OCI-LY7 (cell line): ENCODE measurements at regions of chr11 and their contacts with region 1.

Region 1: DNA sequence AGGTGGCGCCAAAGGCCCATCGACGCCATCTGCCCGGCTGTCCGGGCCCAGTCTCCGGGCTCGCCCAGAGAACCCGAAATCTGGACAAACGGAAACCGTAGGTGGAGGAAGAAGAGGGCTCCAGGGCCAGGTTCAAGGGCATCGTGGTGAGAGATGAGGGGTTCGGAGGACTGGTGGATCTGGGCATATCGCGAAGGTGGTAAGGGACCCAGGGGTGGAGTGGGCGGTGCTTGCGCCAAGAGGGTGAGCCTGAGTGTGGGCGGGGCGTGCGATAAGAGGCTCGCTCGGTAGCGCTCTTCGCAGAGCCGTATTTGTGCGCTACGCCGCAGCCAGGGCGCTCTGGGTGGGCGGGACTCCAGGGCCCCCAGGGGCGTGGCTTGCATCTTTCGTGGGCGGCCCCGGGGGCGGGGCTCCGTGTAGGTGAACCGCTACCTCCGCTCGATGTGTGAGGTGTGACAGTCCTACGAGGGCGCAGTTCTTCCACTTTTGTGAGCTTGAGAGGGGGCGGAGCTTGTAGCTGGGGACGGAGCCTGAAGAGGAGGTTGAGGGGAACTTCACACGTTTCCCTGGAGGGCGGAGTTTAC is 4.8 kb downstream of the CD248 start:
- DNase-seq: peak; percentile 98
- H3K4me3 ChIP-seq: peak overlapping the region; percentile 70
- H3K27ac ChIP-seq: peak overlapping the region; percentile 72
- H3K4me1 ChIP-seq: peaks cover 18% of the 10 kb centered on the region
- CTCF ChIP-seq: peak; percentile 99

Region 2: DNA sequence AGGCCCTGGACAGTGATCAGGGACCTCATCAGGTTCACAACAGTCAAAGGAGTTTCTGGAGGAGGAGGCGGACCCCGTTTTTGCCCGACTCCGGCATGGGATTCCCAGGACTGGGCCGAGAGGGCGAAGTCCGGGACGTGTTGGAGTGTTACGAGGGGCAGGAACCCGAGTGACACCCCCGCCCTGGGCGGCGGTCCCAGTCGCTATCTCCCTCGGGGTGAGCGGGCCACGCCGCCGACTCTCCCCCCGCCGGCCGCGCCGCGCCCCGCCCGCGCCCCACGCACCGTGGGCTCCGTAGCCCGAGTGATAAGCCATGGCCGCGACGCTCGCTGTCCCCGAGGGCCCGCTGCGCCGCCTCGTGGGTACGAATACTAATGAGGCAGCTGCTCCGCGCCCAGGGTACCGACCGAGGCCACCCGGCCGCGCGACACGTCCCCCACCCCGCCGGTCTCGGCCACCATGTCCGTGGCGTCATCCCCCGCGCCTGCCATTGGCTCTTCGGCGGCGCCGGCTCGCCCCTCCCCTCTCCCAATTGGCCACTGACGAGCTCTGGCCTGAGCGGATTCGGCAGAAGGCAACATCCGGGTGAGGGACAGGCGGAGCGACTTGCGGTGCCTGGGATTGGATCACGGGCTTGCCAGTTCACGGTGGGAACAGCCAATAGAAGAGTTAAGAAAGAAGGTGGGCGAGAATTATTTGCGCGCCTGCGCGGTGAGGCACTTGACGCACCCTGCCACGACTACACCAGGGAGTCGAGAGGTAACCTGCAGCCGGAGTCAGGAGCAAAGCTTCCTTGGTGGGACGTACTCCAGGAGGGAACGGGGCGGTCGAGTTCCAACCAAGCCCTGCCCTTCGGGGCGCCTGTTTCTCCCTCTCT is 23.1 kb before region 1 on chr11 and contains the start of gene YIF1A:
- CTCF ChIA-PET with region 1: interaction called, 3 read pairs
- POLR2A ChIA-PET with region 1: interaction called, 13 read pairs
- intact Hi-C with region 1: no loop called
- DNase-seq: peak; percentile 99
- H3K4me3 ChIP-seq: peak within 1 kb of the TSS; percentile 88
- H3K27ac ChIP-seq: peak within 1 kb of the TSS; percentile 37
- H3K4me1 ChIP-seq: peaks cover 31% of the 10 kb centered on the region
- CTCF ChIP-seq: no peak; the same call in 1 of the 2 replicates
- total RNA-seq, gene YIF1A: 63.9 and 73.4 TPM in 2 replicates

Region 3: GRCh38 chr11:66328307-66329144 is 16.5 kb after region 1 on chr11:
- CTCF ChIA-PET with region 1: interaction called, 4 read pairs
- POLR2A ChIA-PET with region 1: interaction called, 7 read pairs
- intact Hi-C with region 1: loop called (anchors 1 kb)
- DNase-seq: peak; percentile 88
- H3K4me3 ChIP-seq: peak overlapping the region; percentile 51
- H3K27ac ChIP-seq: peak overlapping the region; percentile 45
- H3K4me1 ChIP-seq: peaks cover 46% of the 10 kb centered on the region
- CTCF ChIP-seq: peak; percentile 91

Region 4: GRCh38 chr11:66344550-66345315 is 32.7 kb after region 1 on chr11 and contains the start of gene BRMS1:
- CTCF ChIA-PET with region 1: interaction called, 6 read pairs
- POLR2A ChIA-PET with region 1: interaction called, 7 read pairs
- intact Hi-C with region 1: loop called (anchors 5 kb)
- DNase-seq: peak; percentile 96
- H3K4me3 ChIP-seq: peak within 1 kb of the TSS; percentile 88
- H3K27ac ChIP-seq: peak within 1 kb of the TSS; percentile 35
- H3K4me1 ChIP-seq: peaks cover 37% of the 10 kb centered on the region
- CTCF ChIP-seq: no peak
- total RNA-seq, gene BRMS1: 43.8 and 56.2 TPM in 2 replicates

Region 5: GRCh38 chr11:66371627-66372415 is 59.8 kb after region 1 on chr11 and contains the start of gene SLC29A2:
- CTCF ChIA-PET with region 1: interaction called, 3 read pairs
- POLR2A ChIA-PET with region 1: interaction called, 6 read pairs
- intact Hi-C with region 1: loop called (anchors 1 kb)
- DNase-seq: peak; percentile 95
- H3K4me3 ChIP-seq: peak within 1 kb of the TSS; percentile 82
- H3K27ac ChIP-seq: peak within 1 kb of the TSS; percentile 86
- H3K4me1 ChIP-seq: peaks cover 22% of the 10 kb centered on the region
- CTCF ChIP-seq: no peak; the same call in 1 of the 2 replicates
- total RNA-seq, gene SLC29A2: 24.7 and 33.6 TPM in 2 replicates

Region 6: GRCh38 chr11:66386171-66387069 is 74.4 kb after region 1 on chr11:
- CTCF ChIA-PET with region 1: interaction called, 7 read pairs
- POLR2A ChIA-PET with region 1: interaction called, 3 read pairs
- intact Hi-C with region 1: loop called (anchors 1 kb)
- DNase-seq: peak; percentile 91
- H3K4me3 ChIP-seq: peak overlapping the region; percentile 42
- H3K27ac ChIP-seq: no peak overlapping the region
- H3K4me1 ChIP-seq: peaks cover 24% of the 10 kb centered on the region
- CTCF ChIP-seq: peak; percentile 97